GM12878 (cell line): ENCODE measurements at regions of chr10 and their contacts with region 1.

Region 1: GRCh38 chr10:52644373-52645186 is 128.0 kb downstream of the MBL2 start:
- DNase-seq: no peak
- ATAC-seq: peak; percentile 79
- H3K4me3 ChIP-seq: no peak overlapping the region
- H3K27ac ChIP-seq: no peak overlapping the region
- H3K4me1 ChIP-seq: no peaks in the 10 kb centered on the region
- H3K27me3 ChIP-seq: no peaks in the 10 kb centered on the region
- CTCF ChIP-seq: peak; percentile 62 to 67 (median 66)
- EP300 ChIP-seq: no peak
- POLR2A ChIP-seq: no peak
- RAD21 ChIP-seq: peak; percentile 81

Region 2: DNA sequence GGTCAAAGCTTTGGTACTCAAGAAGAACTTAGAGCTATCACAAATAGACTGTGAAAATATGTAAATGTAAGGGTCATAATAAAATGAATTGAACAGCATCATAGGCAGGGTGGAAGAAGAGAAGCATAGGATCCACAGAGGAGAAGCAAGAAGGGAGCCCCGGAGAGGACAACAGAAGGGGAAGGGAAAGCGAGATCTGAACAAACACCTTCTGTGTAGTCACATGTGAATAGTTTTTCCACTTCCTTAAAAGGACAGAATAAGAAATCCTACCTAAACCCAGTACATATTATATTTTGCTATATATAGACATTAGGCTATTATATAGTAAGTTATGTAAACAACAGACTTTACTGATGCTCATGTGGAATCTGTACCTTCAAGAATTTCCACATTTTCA is 170.3 kb before region 1 on chr10:
- CTCF ChIA-PET with region 1: no interaction called
- POLR2A ChIA-PET with region 1: no interaction called
- RAD21 ChIA-PET with region 1: no interaction called
- SMC1A ChIA-PET with region 1: no interaction called
- in situ Hi-C with region 1: no loop called
- intact Hi-C with region 1: no loop called
- DNase-seq: no peak
- ATAC-seq: no peak
- H3K4me3 ChIP-seq: no peak overlapping the region
- H3K27ac ChIP-seq: no peak overlapping the region
- H3K4me1 ChIP-seq: no peaks in the 10 kb centered on the region
- H3K27me3 ChIP-seq: no peaks in the 10 kb centered on the region
- CTCF ChIP-seq: no peak
- EP300 ChIP-seq: no peak
- POLR2A ChIP-seq: no peak
- RAD21 ChIP-seq: no peak

Region 3: GRCh38 chr10:52578871-52579405 is 65.6 kb before region 1 on chr10:
- CTCF ChIA-PET with region 1: no interaction called
- POLR2A ChIA-PET with region 1: no interaction called
- RAD21 ChIA-PET with region 1: no interaction called
- SMC1A ChIA-PET with region 1: no interaction called
- in situ Hi-C with region 1: no loop called
- intact Hi-C with region 1: no loop called
- DNase-seq: no peak
- ATAC-seq: no peak
- H3K4me3 ChIP-seq: no peak overlapping the region
- H3K27ac ChIP-seq: no peak overlapping the region
- H3K4me1 ChIP-seq: no peaks in the 10 kb centered on the region
- H3K27me3 ChIP-seq: no peaks in the 10 kb centered on the region
- CTCF ChIP-seq: no peak
- EP300 ChIP-seq: no peak
- POLR2A ChIP-seq: no peak
- RAD21 ChIP-seq: no peak

Region 4: DNA sequence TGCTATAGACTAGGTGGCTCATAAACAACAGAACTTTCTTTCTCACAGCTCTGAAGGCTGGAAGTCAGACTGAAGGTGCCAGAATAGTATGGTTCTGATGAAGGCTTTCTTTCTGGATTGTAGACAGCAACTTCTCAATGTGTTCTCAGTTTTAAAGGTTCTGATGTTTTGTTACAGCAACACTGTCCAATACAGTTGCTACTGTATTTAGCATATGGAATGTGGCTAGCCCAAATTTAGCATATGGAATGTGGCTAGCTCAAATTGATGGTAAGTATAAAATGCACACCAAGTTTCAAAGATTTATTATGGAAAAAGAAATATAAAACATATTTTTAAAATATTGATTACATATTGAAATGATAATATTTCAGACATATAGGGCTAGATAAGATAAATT is 17.3 kb before region 1 on chr10:
- CTCF ChIA-PET with region 1: interaction called, 12 read pairs
- POLR2A ChIA-PET with region 1: no interaction called
- RAD21 ChIA-PET with region 1: no interaction called
- SMC1A ChIA-PET with region 1: no interaction called
- in situ Hi-C with region 1: no loop called
- intact Hi-C with region 1: no loop called
- DNase-seq: no peak
- ATAC-seq: no peak
- H3K4me3 ChIP-seq: no peak overlapping the region
- H3K27ac ChIP-seq: no peak overlapping the region
- H3K4me1 ChIP-seq: no peaks in the 10 kb centered on the region
- H3K27me3 ChIP-seq: no peaks in the 10 kb centered on the region
- CTCF ChIP-seq: no peak
- EP300 ChIP-seq: no peak
- POLR2A ChIP-seq: no peak
- RAD21 ChIP-seq: no peak

Region 5: DNA sequence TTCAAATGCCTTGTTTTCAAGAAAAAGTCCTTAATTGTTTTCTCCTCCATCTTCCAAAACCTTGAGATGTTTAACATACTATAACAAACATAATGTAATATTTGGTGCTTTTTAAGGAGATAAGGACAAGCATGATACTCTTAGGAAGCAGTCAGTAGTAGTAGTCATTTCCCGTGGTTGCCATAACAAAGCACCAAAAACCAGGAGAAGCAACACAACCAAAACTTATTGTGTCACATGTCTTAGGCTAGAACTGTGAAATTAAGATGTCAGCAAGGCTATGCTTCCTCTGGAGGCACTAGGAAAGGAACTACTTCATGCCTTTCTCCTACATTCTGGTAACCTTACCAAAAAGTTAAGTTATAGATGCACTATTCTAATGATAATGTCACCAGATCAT is 21.2 kb after region 1 on chr10:
- CTCF ChIA-PET with region 1: interaction called, 6 read pairs
- POLR2A ChIA-PET with region 1: interaction called, 3 read pairs
- RAD21 ChIA-PET with region 1: no interaction called
- SMC1A ChIA-PET with region 1: no interaction called
- in situ Hi-C with region 1: no loop called
- intact Hi-C with region 1: loop called (anchors 2 kb)
- DNase-seq: no peak
- ATAC-seq: no peak
- H3K4me3 ChIP-seq: no peak overlapping the region
- H3K27ac ChIP-seq: no peak overlapping the region
- H3K4me1 ChIP-seq: no peaks in the 10 kb centered on the region
- H3K27me3 ChIP-seq: no peaks in the 10 kb centered on the region
- CTCF ChIP-seq: no peak
- EP300 ChIP-seq: no peak
- POLR2A ChIP-seq: no peak
- RAD21 ChIP-seq: no peak

Region 6: GRCh38 chr10:52677086-52677485 is 32.5 kb after region 1 on chr10:
- CTCF ChIA-PET with region 1: interaction called, 12 read pairs
- POLR2A ChIA-PET with region 1: no interaction called
- RAD21 ChIA-PET with region 1: no interaction called
- SMC1A ChIA-PET with region 1: no interaction called
- in situ Hi-C with region 1: no loop called
- intact Hi-C with region 1: no loop called
- DNase-seq: no peak
- ATAC-seq: no peak
- H3K4me3 ChIP-seq: no peak overlapping the region
- H3K27ac ChIP-seq: no peak overlapping the region
- H3K4me1 ChIP-seq: no peaks in the 10 kb centered on the region
- H3K27me3 ChIP-seq: no peaks in the 10 kb centered on the region
- CTCF ChIP-seq: no peak
- EP300 ChIP-seq: no peak
- POLR2A ChIP-seq: no peak
- RAD21 ChIP-seq: no peak

Region 7: GRCh38 chr10:52720018-52720417 is 75.4 kb after region 1 on chr10:
- CTCF ChIA-PET with region 1: interaction called, 14 read pairs
- POLR2A ChIA-PET with region 1: no interaction called
- RAD21 ChIA-PET with region 1: interaction called, 3 read pairs
- SMC1A ChIA-PET with region 1: interaction called, 3 read pairs
- in situ Hi-C with region 1: no loop called
- intact Hi-C with region 1: no loop called
- DNase-seq: no peak
- ATAC-seq: no peak
- H3K4me3 ChIP-seq: no peak overlapping the region
- H3K27ac ChIP-seq: no peak overlapping the region
- H3K4me1 ChIP-seq: no peaks in the 10 kb centered on the region
- H3K27me3 ChIP-seq: no peaks in the 10 kb centered on the region
- CTCF ChIP-seq: no peak
- EP300 ChIP-seq: no peak
- POLR2A ChIP-seq: no peak
- RAD21 ChIP-seq: no peak

Region 8: GRCh38 chr10:52729271-52730104 is 84.9 kb after region 1 on chr10:
- CTCF ChIA-PET with region 1: interaction called, 77 read pairs
- POLR2A ChIA-PET with region 1: no interaction called
- RAD21 ChIA-PET with region 1: interaction called, 18 read pairs
- SMC1A ChIA-PET with region 1: interaction called, 41 read pairs
- in situ Hi-C with region 1: no loop called
- intact Hi-C with region 1: loop called (anchors 1 kb)
- DNase-seq: no peak
- ATAC-seq: peak; percentile 68
- H3K4me3 ChIP-seq: no peak overlapping the region
- H3K27ac ChIP-seq: no peak overlapping the region
- H3K4me1 ChIP-seq: no peaks in the 10 kb centered on the region
- H3K27me3 ChIP-seq: no peaks in the 10 kb centered on the region
- CTCF ChIP-seq: peak; percentile 31 to 54 (median 45); a peak in 5 of 6 replicates
- EP300 ChIP-seq: no peak
- POLR2A ChIP-seq: no peak
- RAD21 ChIP-seq: peak; percentile 72

Region 9: DNA sequence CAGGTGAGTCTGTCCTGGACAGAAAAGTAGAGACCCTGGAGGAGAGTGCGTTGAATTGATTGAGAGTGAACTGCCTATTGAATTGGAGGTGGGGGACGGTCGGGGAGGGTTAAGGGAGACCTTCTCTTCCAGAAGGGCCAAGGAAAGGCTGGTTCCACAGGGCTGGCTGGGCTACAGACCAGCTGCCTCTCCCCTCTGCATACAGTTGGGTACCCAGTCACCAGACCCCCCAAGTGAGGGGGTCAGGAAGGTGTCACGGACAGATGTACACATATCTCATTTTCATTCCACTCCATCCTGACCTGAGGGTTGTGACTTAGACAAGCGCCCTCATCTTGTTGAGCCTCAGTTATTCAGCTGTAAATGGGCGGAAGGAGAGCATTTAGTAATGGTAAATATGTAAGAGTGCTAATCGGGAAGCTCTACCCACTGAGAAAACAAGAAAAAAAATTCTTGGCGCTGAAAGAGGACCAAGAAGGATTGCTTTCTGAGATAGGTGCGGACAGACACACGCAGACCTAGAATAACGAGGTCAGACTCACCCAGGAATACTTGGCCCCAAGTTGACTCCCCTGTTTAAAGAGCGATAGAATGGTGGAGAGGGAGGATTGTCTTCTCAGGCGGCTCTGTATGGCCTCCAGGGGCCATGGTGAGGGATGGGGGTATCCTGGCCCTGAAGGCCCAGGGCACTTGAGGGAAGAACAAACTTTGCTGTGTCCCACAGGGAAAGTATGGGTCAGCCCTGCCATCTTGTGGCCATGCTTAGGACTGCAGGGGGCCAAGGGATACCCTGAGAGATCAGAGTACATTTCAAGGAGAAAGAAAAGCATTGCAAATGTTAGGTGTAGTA is 135.2 kb after region 1 on chr10:
- CTCF ChIA-PET with region 1: interaction called, 56 read pairs
- POLR2A ChIA-PET with region 1: no interaction called
- RAD21 ChIA-PET with region 1: interaction called, 15 read pairs
- SMC1A ChIA-PET with region 1: interaction called, 5 read pairs
- in situ Hi-C with region 1: loop called (anchors 5 kb)
- intact Hi-C with region 1: loop called (anchors 1 kb)
- DNase-seq: no peak
- ATAC-seq: peak; percentile 96
- H3K4me3 ChIP-seq: no peak overlapping the region
- H3K27ac ChIP-seq: no peak overlapping the region
- H3K4me1 ChIP-seq: no peaks in the 10 kb centered on the region
- H3K27me3 ChIP-seq: no peaks in the 10 kb centered on the region
- CTCF ChIP-seq: peak; percentile 87 to 96 (median 94)
- EP300 ChIP-seq: no peak
- POLR2A ChIP-seq: no peak
- RAD21 ChIP-seq: peak; percentile 85